ENCODE measurements at regions of chrX and their contacts with region 1.

Region 1: DNA sequence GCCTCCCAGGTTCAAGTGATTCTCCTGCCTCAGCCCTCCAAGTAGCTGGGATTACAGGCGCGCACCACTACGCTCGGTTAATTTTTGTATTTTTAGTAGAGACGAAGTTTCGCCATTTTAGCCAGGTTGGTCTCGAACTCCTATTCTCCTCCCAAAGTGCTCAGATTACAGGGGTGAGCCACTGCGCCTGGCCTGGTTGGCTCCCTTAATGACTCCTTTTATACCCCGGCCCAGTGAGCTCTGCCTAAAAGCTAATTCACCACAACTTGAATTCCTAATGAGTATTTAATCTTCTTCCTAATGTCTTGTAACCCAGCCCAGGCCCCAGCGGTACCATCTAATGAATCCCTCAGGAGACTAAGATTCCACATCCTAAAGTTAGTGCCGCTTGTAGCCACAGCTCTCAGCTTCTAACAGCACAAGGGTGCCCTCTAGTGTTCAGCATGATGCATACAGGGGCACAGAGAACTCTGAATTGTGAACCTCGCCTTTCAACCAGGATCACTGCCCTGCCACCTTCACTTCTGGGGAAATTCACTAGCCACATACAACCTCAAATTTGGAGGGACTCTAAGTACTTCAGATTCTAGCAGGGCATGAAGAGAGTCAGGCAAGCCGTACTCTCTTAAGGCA is 89.5 kb downstream of the OR13H1 start:
- DNase-seq: peak; percentile 43
- H3K4me3 ChIP-seq: no peak overlapping the region
- H3K27ac ChIP-seq: no peak overlapping the region
- H3K4me1 ChIP-seq: no peaks in the 10 kb centered on the region
- H3K27me3 ChIP-seq: no peaks in the 10 kb centered on the region
- CTCF ChIP-seq: peak; percentile 33 to 82 (median 54)
- EP300 ChIP-seq: no peak
- POLR2A ChIP-seq: no peak

Region 2: DNA sequence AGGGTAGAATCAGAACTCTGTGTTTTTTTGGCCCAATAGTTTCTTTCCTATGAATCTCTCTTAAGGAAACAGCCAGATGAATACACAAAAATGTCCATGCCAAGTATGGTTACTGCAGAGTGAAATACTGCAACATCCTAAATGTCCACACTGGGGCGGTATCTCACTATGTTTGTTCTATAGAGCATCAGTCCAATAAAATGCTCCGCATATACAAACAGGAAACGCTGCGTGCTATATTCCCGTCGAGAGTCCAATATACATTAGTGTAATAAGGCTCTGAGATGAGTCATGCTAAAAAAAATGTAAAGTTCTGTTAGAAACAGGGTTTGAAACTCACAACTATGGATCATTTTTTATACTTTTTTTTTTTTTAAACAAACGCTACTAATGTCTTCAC is 657.5 kb before region 1 on chrX:
- in situ Hi-C with region 1: loop called in 2 of 4 experiments (anchors 10 to 25 kb)
- intact Hi-C with region 1: no loop called
- DNase-seq: peak; percentile 38
- H3K4me3 ChIP-seq: no peak overlapping the region
- H3K27ac ChIP-seq: no peak overlapping the region
- H3K4me1 ChIP-seq: no peaks in the 10 kb centered on the region
- H3K27me3 ChIP-seq: no peaks in the 10 kb centered on the region
- CTCF ChIP-seq: peak; percentile 41 to 47 (median 43)
- EP300 ChIP-seq: no peak
- POLR2A ChIP-seq: no peak

Region 3: GRCh38 chrX:132776486-132777210 is 1143.2 kb after region 1 on chrX:
- in situ Hi-C with region 1: no loop called
- intact Hi-C with region 1: no loop called
- DNase-seq: no peak
- H3K4me3 ChIP-seq: no peak overlapping the region
- H3K27ac ChIP-seq: no peak overlapping the region
- H3K4me1 ChIP-seq: no peaks in the 10 kb centered on the region
- H3K27me3 ChIP-seq: no peaks in the 10 kb centered on the region
- CTCF ChIP-seq: no peak
- EP300 ChIP-seq: no peak
- POLR2A ChIP-seq: no peak